Left cardiac atrium (tissue), 4 donors: ENCODE measurements at regions of chr15 and their contacts with region 1.

Region 1: DNA sequence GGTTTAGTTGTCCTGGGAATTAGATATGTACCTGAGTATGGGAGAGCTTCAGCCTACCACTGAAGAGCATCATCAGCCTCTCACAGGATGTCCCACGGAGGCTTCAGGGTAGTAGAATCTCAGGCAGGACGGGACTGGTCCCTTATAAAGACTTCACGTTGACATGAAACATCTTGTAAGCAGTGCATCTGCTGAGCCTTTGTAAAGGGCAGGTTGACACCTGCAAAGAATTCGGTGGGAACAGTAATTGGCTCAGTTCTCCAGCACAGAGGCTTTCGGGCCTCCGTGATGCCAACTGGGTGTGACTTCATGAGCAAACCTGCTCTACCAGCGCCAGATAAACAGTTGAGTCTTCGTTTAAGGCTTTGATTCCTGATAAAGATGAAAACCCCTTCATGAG is 26.9 kb upstream of the AVEN start:
- DNase-seq: no peak
- ATAC-seq: no peak

Region 2: GRCh38 chr15:34587717-34588674 is 522.1 kb after region 1 on chr15:
- intact Hi-C with region 1: loop called in 1 of 2 experiments (anchors 10 kb)
- DNase-seq: peak; percentile 65
- ATAC-seq: peak; percentile 57 to 64